Sigmoid colon (tissue), 7 donors: ENCODE measurements at regions of chr9 and their contacts with region 1.

Region 1: GRCh38 chr9:128552153-128552743 is at the start of gene SPTAN1:
- DNase-seq: peak; percentile 96
- H3K4me3 ChIP-seq: peak within 1 kb of the TSS; percentile 86 to 100 (median 95)
- H3K27ac ChIP-seq: peak within 1 kb of the TSS; percentile 98 to 100 (median 98)
- H3K4me1 ChIP-seq: peaks cover 0 to 74% (median 64%) of the 10 kb centered on the region in 4 donors
- H3K27me3 ChIP-seq: no peaks in the 10 kb centered on the region
- CTCF ChIP-seq: peak in 2 of 4 experiments; percentile 30 to 36
- EP300 ChIP-seq: peak in 1 of 4 donors; percentile 16
- POLR2A ChIP-seq: peak; percentile 75 to 89
- total RNA-seq, gene SPTAN1: 150 to 306 (median 163) TPM

Region 2: DNA sequence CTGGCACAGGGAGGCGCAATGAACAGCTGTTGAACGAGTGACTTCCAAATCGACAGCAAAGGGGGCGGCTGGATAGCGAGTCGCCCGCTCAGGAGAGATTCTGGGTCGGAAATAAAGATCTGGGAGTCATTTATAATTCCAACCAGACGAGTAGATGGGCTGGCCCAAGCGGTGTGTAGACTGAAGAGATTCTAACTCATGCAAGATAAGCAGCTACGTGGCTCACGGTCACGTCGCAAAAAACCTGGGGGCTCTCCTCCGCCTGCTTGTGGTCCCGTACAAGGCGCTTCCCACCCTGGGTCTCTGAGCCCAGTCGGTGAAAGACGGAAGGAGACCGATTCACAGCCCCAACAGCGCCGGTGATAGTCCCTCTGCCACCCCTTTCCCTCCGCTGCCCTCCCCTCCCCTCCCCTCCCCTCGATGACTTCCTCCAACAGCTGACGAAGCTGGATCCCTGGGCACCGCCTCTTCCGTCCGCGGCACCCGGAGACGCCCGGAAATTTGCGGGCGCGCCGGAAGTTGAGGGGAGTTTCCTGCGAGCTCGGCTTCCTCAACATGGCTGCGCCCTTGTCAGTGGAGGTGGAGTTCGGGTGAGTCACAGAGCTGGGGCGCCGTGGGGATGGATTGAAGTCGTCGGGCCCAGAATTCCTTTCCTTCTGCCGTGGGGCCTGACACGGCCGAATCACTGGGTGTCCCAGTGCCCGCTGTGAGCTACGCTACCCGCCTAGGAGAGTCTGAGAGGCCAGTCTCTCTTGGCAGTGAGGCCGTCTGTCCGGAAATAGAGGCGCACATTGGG is 181.2 kb before region 1 on chr9 and contains the start of gene URM1:
- intact Hi-C with region 1: loop called (anchors 5 kb)
- DNase-seq: peak; percentile 97
- H3K4me3 ChIP-seq: peak within 1 kb of the TSS; percentile 52 to 75 (median 72)
- H3K27ac ChIP-seq: peak within 1 kb of the TSS; percentile 88 to 95 (median 94)
- H3K4me1 ChIP-seq: peaks cover 0 to 32% (median 23%) of the 10 kb centered on the region in 4 donors
- H3K27me3 ChIP-seq: no peaks in the 10 kb centered on the region
- CTCF ChIP-seq: no peak
- EP300 ChIP-seq: no peak
- POLR2A ChIP-seq: peak; percentile 91 to 95
- total RNA-seq, gene URM1: 16.3 to 25.1 (median 20.4) TPM

Region 3: DNA sequence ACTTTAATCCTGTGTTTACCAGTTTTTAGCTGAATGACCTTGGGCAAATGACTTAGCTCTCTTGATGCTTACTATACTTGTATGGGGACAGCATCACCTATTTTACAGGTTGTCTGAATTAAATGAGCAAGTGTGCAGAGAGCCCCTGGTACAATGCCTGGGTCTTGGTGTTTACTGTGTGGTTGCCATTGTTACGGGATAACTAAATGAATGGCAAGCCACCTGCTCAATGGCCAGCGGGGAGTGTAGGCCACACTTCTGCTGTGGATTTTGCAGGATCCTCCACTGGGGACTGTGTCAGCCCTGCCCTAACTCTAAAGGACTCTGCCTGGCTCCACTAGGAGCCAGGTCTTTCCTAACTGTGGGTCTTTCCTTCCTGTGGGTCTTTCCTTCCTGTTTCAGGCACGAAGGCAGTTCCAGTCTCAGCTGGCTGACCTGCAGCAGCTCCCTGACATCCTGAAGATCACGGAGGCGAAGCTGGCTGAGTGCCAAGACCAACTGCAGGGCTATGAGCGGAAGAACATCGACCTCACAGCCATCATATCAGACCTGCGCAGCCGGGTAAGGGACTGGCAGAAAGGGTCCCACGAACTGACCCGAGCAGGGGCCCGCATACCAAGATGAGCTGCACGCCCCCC is 58.0 kb before region 1 on chr9:
- intact Hi-C with region 1: no loop called
- DNase-seq: peak; percentile 74
- H3K4me3 ChIP-seq: no peak overlapping the region
- H3K27ac ChIP-seq: peak overlapping the region in 2 of 4 donors; percentile 9 to 18
- H3K4me1 ChIP-seq: no peaks in the 10 kb centered on the region
- H3K27me3 ChIP-seq: no peaks in the 10 kb centered on the region
- CTCF ChIP-seq: no peak
- EP300 ChIP-seq: no peak
- POLR2A ChIP-seq: no peak

Region 4: GRCh38 chr9:128504485-128505413 is 47.5 kb before region 1 on chr9 and contains the start of gene GLE1:
- intact Hi-C with region 1: loop called (anchors 5 kb)
- DNase-seq: peak; percentile 96
- H3K4me3 ChIP-seq: peak within 1 kb of the TSS; percentile 75 to 92 (median 78)
- H3K27ac ChIP-seq: peak within 1 kb of the TSS; percentile 83 to 87 (median 86)
- H3K4me1 ChIP-seq: peaks cover 0 to 27% (median 21%) of the 10 kb centered on the region in 4 donors
- H3K27me3 ChIP-seq: no peaks in the 10 kb centered on the region
- CTCF ChIP-seq: no peak
- EP300 ChIP-seq: no peak
- POLR2A ChIP-seq: peak; percentile 51 to 63
- total RNA-seq, gene GLE1: 17.6 to 29.4 (median 20.9) TPM

Region 5: GRCh38 chr9:128688512-128689292 is 136.5 kb after region 1 on chr9 and contains the start of gene SET:
- intact Hi-C with region 1: loop called (anchors 5 kb)
- DNase-seq: peak; percentile 97
- H3K4me3 ChIP-seq: peak within 1 kb of the TSS; percentile 78 to 98 (median 94)
- H3K27ac ChIP-seq: peak within 1 kb of the TSS; percentile 95 to 100 (median 98)
- H3K4me1 ChIP-seq: peaks cover 0 to 40% (median 35%) of the 10 kb centered on the region in 4 donors
- H3K27me3 ChIP-seq: no peaks in the 10 kb centered on the region
- CTCF ChIP-seq: no peak
- EP300 ChIP-seq: no peak
- POLR2A ChIP-seq: no peak
- total RNA-seq, gene SET: 182 to 195 (median 187) TPM

Region 6: GRCh38 chr9:128818099-128818838 is 266.0 kb after region 1 on chr9 and contains the start of gene ENDOG:
- intact Hi-C with region 1: loop called (anchors 5 kb)
- DNase-seq: peak; percentile 99
- H3K4me3 ChIP-seq: peak within 1 kb of the TSS; percentile 34 to 72 (median 58)
- H3K27ac ChIP-seq: peak within 1 kb of the TSS; percentile 84 to 87 (median 86)
- H3K4me1 ChIP-seq: peaks cover 0 to 20% (median 18%) of the 10 kb centered on the region in 4 donors
- H3K27me3 ChIP-seq: no peaks in the 10 kb centered on the region
- CTCF ChIP-seq: peak; percentile 93 to 99 (median 96)
- EP300 ChIP-seq: no peak
- POLR2A ChIP-seq: peak; percentile 58
- total RNA-seq, gene ENDOG: 5.9 to 15.7 (median 9.0) TPM